Spleen (tissue), 13 donors: ENCODE measurements at regions of chr15 and their contacts with region 1.

Region 1: DNA sequence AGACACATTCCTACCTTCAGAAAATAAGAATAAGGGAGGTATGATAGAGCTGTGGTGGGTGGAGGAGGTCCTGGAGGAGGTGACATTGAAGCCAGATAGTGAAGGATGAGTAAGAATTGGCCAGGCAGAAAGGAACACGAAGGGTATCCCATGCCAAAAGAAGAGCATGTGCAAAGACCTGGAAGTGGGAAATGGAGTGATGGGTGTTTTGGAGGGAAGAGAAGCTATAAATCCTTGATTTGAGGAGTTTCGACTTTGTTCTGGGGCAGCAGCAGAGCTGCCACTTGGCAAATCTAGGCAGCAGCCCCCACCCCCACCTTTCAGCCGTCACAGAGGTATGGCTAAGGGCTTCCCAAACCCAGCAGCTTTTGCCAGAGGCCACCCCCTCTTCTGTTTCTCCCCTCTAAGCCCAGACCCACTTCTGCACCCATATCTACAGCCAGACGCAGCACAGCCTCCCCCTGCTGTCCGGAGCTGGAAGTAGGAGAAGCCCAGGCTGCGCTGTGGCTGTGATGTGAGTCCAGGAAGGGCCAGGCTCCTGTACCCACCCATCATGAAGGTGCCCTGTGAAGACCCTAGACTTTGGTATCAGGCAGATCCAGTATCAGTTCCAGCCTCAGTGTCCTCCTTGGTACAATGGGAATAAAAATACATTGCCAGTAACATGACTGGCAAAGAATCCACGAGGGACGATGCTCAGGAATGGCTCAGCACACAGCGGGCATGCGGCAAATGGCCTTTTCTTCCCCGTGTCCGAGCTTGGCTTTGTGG is 188.7 kb upstream of the LINGO1 start:
- DNase-seq: no peak
- H3K4me3 ChIP-seq: no peak overlapping the region
- H3K27ac ChIP-seq: no peak overlapping the region
- H3K4me1 ChIP-seq: peaks cover 0 to 32% (median 22%) of the 10 kb centered on the region in 6 donors
- H3K27me3 ChIP-seq: peaks cover 0 to 73% (median 51%) of the 10 kb centered on the region in 7 donors
- CTCF ChIP-seq: peak in 9 of 11 experiments; percentile 24 to 74 (median 55)
- POLR2A ChIP-seq: no peak

Region 2: DNA sequence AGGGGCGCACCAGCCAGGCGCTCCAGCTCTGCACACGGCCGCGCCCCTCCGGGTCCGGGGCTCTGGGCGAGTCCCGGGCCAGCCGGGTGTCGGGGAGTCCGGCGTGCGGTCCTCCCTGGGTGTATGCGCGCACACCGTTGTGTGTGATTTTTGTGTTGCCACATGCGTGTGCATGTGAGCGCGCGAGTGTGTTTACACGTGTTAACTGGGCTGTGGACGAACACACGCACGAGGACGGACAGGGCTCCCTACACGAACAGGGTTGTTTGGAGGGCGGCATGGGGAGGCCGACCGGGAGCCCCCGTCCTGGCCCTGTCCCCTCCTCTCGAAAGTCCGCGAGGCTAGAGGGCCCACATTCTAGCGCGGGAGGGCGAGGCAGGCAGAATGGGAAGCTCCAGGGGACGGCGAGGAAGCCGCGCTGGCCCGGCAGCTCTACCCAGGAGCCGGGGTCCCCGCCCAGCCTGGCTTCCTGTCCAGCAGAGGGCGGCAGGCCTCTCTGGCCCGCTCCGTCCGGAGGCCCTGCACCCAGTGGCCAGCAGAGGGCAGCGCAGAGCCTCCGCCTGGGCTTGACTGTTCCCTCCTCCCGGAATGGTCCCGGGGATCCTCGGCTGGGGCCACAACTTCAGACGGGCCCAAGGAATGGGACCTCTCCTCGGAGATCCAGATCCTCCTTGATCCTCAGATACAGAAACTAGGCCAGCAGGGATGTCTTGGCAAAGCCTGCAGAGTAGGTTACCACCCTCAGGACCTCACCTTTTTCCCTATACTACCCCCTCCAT is 188.1 kb before region 1 on chr15:
- intact Hi-C with region 1: loop called (anchors 10 kb)
- DNase-seq: peak; percentile 95
- H3K4me3 ChIP-seq: peak overlapping the region; percentile 39 to 73 (median 53)
- H3K27ac ChIP-seq: peak overlapping the region in 3 of 8 donors; percentile 12 to 53 (median 46)
- H3K4me1 ChIP-seq: peaks cover 12 to 47% (median 33%) of the 10 kb centered on the region in 6 donors
- H3K27me3 ChIP-seq: peaks cover 8 to 83% (median 47%) of the 10 kb centered on the region in 7 donors
- CTCF ChIP-seq: peak; percentile 83 to 100 (median 99)
- POLR2A ChIP-seq: no peak